Aorta (tissue), 5 donors: ENCODE measurements at regions of chr6 and their contacts with region 1.

Region 1: DNA sequence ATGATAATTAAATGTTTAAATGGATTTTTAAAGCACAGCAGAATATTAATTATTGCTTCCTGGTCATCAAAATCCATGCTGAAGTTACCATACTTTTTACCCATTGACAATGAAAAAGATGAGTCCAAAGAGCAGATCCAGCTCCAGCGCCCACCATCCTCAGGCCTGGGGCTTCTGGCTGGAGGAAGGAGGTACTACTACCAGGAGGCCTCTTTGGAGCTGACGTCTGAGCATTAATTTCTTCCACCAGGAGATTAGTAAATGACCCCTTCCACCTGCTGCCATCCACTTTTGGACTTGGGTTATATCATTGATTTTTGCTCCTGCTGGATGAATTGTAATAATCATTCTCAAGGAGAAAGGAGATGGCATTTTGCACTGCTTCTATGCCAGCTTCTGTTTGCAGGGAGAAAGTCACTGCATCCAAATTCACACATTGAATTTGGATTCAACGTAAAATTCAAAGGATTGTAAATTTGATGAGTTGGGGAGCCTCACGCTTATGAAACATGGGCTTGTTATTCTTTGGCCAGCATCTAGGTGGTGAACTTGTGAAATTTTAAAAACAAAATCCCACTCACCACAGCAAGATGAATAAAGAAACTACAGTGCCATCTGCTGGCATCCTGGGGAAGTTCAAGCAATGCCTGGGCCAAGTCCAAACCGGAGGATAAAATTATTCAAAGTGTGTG is 121.8 kb downstream of the SASH1 start:
- DNase-seq: no peak
- ATAC-seq: peak; percentile 90
- H3K4me3 ChIP-seq: no peak overlapping the region
- H3K27ac ChIP-seq: no peak overlapping the region
- H3K4me1 ChIP-seq: no peaks in the 10 kb centered on the region
- H3K27me3 ChIP-seq: no peaks in the 10 kb centered on the region

Region 2: GRCh38 chr6:148177589-148178233 is 286.8 kb before region 1 on chr6:
- intact Hi-C with region 1: loop called (anchors 5 kb)
- DNase-seq: peak; percentile 75 to 91
- ATAC-seq: peak; percentile 81
- H3K4me3 ChIP-seq: no peak overlapping the region
- H3K27ac ChIP-seq: no peak overlapping the region
- H3K4me1 ChIP-seq: no peaks in the 10 kb centered on the region
- H3K27me3 ChIP-seq: no peaks in the 10 kb centered on the region

Region 3: GRCh38 chr6:148186916-148187315 is 277.5 kb before region 1 on chr6:
- intact Hi-C with region 1: loop called in 1 of 2 experiments (anchors 5 kb)
- DNase-seq: no peak
- ATAC-seq: no peak
- H3K4me3 ChIP-seq: no peak overlapping the region
- H3K27ac ChIP-seq: no peak overlapping the region
- H3K4me1 ChIP-seq: peaks cover 0 to 2% of the 10 kb centered on the region in 2 donors
- H3K27me3 ChIP-seq: no peaks in the 10 kb centered on the region

Region 4: GRCh38 chr6:148250975-148251685 is 213.3 kb before region 1 on chr6:
- intact Hi-C with region 1: loop called in 1 of 2 experiments (anchors 10 kb)
- DNase-seq: no peak
- ATAC-seq: peak; percentile 87
- H3K4me3 ChIP-seq: no peak overlapping the region
- H3K27ac ChIP-seq: no peak overlapping the region
- H3K4me1 ChIP-seq: peaks cover 0 to 4% of the 10 kb centered on the region in 2 donors
- H3K27me3 ChIP-seq: no peaks in the 10 kb centered on the region

Region 5: GRCh38 chr6:148263010-148263409 is 201.5 kb before region 1 on chr6:
- intact Hi-C with region 1: loop called (anchors 5 to 10 kb)
- DNase-seq: no peak
- ATAC-seq: no peak
- H3K4me3 ChIP-seq: no peak overlapping the region
- H3K27ac ChIP-seq: no peak overlapping the region
- H3K4me1 ChIP-seq: peaks cover 2% of the 10 kb centered on the region in 2 donors
- H3K27me3 ChIP-seq: no peaks in the 10 kb centered on the region

Region 6: GRCh38 chr6:148342357-148343046 is 122.0 kb before region 1 on chr6 and contains the start of gene SASH1:
- intact Hi-C with region 1: loop called in 1 of 2 experiments (anchors 5 kb)
- DNase-seq: peak; percentile 83 to 85
- ATAC-seq: peak; percentile 83
- H3K4me3 ChIP-seq: peak within 1 kb of the TSS; percentile 99 to 100
- H3K27ac ChIP-seq: peak within 1 kb of the TSS; percentile 62 to 98
- H3K4me1 ChIP-seq: peaks cover 5 to 8% of the 10 kb centered on the region in 2 donors
- H3K27me3 ChIP-seq: no peaks in the 10 kb centered on the region
- total RNA-seq, gene SASH1: 89.7 to 120 TPM

Region 7: GRCh38 chr6:148524976-148525375 is 60.5 kb after region 1 on chr6:
- intact Hi-C with region 1: loop called in 1 of 2 experiments (anchors 2 kb)
- DNase-seq: no peak
- ATAC-seq: no peak
- H3K4me3 ChIP-seq: peak overlapping the region in 1 of 2 donors; percentile 69
- H3K27ac ChIP-seq: peak overlapping the region; percentile 80 to 98
- H3K4me1 ChIP-seq: peaks cover 0 to 3% of the 10 kb centered on the region in 2 donors
- H3K27me3 ChIP-seq: no peaks in the 10 kb centered on the region